ENCODE measurements at regions of chr21 and their contacts with region 1.

Region 1: DNA sequence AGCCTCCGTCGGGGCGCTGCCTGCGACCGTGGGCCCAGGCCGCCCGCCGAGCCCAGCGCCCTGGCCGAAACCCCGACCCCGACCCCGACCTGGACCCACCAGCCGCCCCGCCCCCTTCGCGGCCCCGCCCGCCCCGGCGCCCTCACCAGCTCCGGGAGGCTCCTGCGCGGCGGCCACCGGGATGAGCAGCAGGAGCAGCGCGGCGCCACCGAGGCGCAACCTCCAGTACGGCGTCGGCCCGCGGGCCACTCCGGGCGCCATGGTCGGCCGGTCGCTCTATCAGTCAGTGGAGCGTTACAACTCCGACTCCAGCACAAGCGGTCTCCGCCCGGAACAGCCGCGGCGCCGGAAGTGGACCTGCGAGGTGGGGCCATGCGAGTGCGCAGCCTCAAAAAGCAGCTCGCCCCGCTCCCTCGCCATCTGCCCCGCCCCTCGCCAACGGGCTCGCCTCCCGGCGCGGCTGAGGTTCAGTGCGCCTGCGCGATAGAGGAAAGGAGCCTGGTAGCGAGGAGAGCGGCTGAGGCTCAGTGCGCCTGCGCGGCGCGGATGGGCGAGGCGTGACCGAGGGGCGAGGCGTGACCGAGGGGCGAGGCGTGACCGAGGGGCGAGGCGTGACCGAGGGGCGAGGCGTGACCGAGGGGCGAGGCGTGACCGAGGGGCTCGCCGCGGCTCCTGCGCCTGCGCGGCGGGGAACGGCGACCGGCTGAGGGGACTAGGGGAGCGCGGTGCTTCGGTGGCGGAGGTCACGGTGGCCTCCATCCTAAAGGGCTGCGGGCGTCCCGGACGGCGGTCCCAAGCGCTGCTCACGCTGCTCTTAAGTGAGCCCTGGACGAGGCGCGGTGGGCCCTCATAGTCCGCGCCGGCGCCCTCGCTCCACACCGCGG is at the start of gene PTTG1IP:
- H3K4me3 Mint-ChIP-seq: peak within 1 kb of the TSS; percentile 97
- H3K27ac Mint-ChIP-seq: peak within 1 kb of the TSS; percentile 100
- H3K4me1 Mint-ChIP-seq: peaks cover 69% of the 10 kb centered on the region
- H3K27me3 Mint-ChIP-seq: no peaks in the 10 kb centered on the region

Region 2: DNA sequence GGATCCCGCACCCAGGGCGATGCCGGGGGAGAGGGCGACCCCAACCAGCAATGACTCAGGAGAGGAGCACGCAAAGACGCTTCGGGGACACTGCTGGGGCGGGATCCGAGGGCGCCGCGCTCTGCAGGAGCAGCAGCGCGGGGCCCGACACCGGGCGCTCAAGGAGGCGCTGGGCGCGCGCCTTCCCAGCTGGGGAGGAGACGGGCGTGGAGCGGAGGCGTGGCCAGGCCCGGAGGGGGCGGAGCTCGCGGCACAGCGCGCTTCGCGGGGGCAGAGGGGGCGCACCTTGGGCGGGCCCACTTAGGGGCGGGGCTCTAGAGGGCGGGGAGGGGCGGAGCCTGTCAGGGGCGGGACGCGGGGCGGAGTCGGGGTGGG is 56.1 kb before region 1 on chr21:
- intact Hi-C with region 1: loop called (anchors 1 kb)
- H3K4me3 Mint-ChIP-seq: peak overlapping the region; percentile 77
- H3K27ac Mint-ChIP-seq: peak overlapping the region; percentile 77
- H3K4me1 Mint-ChIP-seq: peaks cover 39% of the 10 kb centered on the region
- H3K27me3 Mint-ChIP-seq: peaks cover 13% of the 10 kb centered on the region

Region 3: GRCh38 chr21:44845399-44846223 is 28.0 kb before region 1 on chr21:
- intact Hi-C with region 1: no loop called
- H3K4me3 Mint-ChIP-seq: peak overlapping the region; percentile 67
- H3K27ac Mint-ChIP-seq: peak overlapping the region; percentile 86
- H3K4me1 Mint-ChIP-seq: peaks cover 49% of the 10 kb centered on the region
- H3K27me3 Mint-ChIP-seq: peaks cover 27% of the 10 kb centered on the region

Region 4: GRCh38 chr21:44911389-44912157 is 38.0 kb after region 1 on chr21:
- intact Hi-C with region 1: loop called (anchors 5 kb)
- H3K4me3 Mint-ChIP-seq: peak overlapping the region; percentile 65
- H3K27ac Mint-ChIP-seq: peak overlapping the region; percentile 79
- H3K4me1 Mint-ChIP-seq: peaks cover 95% of the 10 kb centered on the region
- H3K27me3 Mint-ChIP-seq: no peaks in the 10 kb centered on the region